GM12878 (cell line): ENCODE measurements at regions of chr13 and their contacts with region 1.

Region 1: GRCh38 chr13:75760131-75761021 is 124.2 kb downstream of the LMO7 start:
- DNase-seq: no peak
- ATAC-seq: no peak
- H3K4me3 ChIP-seq: no peak overlapping the region
- H3K27ac ChIP-seq: peak overlapping the region; percentile 93
- H3K4me1 ChIP-seq: peaks cover 15% of the 10 kb centered on the region
- H3K27me3 ChIP-seq: no peaks in the 10 kb centered on the region
- CTCF ChIP-seq: no peak
- EP300 ChIP-seq: no peak
- POLR2A ChIP-seq: no peak
- RAD21 ChIP-seq: peak; percentile 20; the same call in 1 of the 2 replicates

Region 2: GRCh38 chr13:75715601-75716523 is 44.5 kb before region 1 on chr13:
- CTCF ChIA-PET with region 1: interaction called, 4 read pairs
- POLR2A ChIA-PET with region 1: interaction called, 3 read pairs
- RAD21 ChIA-PET with region 1: interaction called, 9 read pairs
- SMC1A ChIA-PET with region 1: interaction called, 25 read pairs
- in situ Hi-C with region 1: no loop called
- intact Hi-C with region 1: no loop called
- DNase-seq: peak; percentile 41
- ATAC-seq: peak; percentile 96
- H3K4me3 ChIP-seq: no peak overlapping the region
- H3K27ac ChIP-seq: peak overlapping the region; percentile 35; the same call in 1 of the 2 replicates
- H3K4me1 ChIP-seq: no peaks in the 10 kb centered on the region
- H3K27me3 ChIP-seq: no peaks in the 10 kb centered on the region
- CTCF ChIP-seq: no peak
- EP300 ChIP-seq: no peak
- POLR2A ChIP-seq: no peak
- RAD21 ChIP-seq: no peak

Region 3: GRCh38 chr13:75739244-75739868 is 21.0 kb before region 1 on chr13:
- CTCF ChIA-PET with region 1: no interaction called
- POLR2A ChIA-PET with region 1: interaction called, 5 read pairs
- RAD21 ChIA-PET with region 1: interaction called, 8 read pairs
- SMC1A ChIA-PET with region 1: interaction called, 30 read pairs
- in situ Hi-C with region 1: no loop called
- intact Hi-C with region 1: no loop called
- DNase-seq: peak; percentile 24
- ATAC-seq: peak; percentile 73
- H3K4me3 ChIP-seq: peak overlapping the region; percentile 10; the same call in 1 of the 2 replicates
- H3K27ac ChIP-seq: peak overlapping the region; percentile 80
- H3K4me1 ChIP-seq: peaks cover 19% of the 10 kb centered on the region
- H3K27me3 ChIP-seq: no peaks in the 10 kb centered on the region
- CTCF ChIP-seq: no peak
- EP300 ChIP-seq: no peak
- POLR2A ChIP-seq: no peak
- RAD21 ChIP-seq: no peak

Region 4: DNA sequence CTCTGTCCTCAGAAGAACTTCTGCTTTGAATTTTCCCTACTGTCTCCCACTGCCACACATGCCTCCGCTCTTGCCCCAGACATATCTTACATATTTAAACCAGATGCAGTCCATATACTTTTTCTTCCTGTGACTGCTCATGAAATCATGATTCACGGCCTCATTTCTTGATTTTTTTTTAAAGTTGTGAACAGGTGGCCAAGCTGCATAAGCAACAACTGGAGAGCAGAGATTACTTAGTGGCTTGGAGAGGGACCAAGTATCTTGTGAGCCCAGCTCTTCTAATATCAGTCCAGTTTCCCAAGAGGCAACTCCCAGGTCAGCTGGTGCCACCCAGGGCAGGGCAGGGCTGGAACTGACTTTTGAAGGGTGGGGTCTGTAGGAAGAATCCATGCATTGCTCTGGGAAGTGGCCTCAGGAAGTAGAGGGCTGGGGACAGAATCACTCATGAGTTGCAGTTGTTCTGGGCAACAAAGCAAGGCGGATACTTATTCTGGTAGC is 28.2 kb after region 1 on chr13:
- CTCF ChIA-PET with region 1: interaction called, 3 read pairs
- POLR2A ChIA-PET with region 1: interaction called, 4 read pairs
- RAD21 ChIA-PET with region 1: interaction called, 14 read pairs
- SMC1A ChIA-PET with region 1: interaction called, 50 read pairs
- in situ Hi-C with region 1: no loop called
- intact Hi-C with region 1: no loop called
- DNase-seq: no peak
- ATAC-seq: no peak
- H3K4me3 ChIP-seq: no peak overlapping the region
- H3K27ac ChIP-seq: no peak overlapping the region
- H3K4me1 ChIP-seq: no peaks in the 10 kb centered on the region
- H3K27me3 ChIP-seq: no peaks in the 10 kb centered on the region
- CTCF ChIP-seq: no peak
- EP300 ChIP-seq: no peak
- POLR2A ChIP-seq: no peak
- RAD21 ChIP-seq: no peak

Region 5: GRCh38 chr13:75803164-75803611 is 42.8 kb after region 1 on chr13:
- CTCF ChIA-PET with region 1: interaction called, 14 read pairs
- POLR2A ChIA-PET with region 1: no interaction called
- RAD21 ChIA-PET with region 1: interaction called, 6 read pairs
- SMC1A ChIA-PET with region 1: interaction called, 31 read pairs
- in situ Hi-C with region 1: no loop called
- intact Hi-C with region 1: no loop called
- DNase-seq: no peak
- ATAC-seq: peak; percentile 33
- H3K4me3 ChIP-seq: no peak overlapping the region
- H3K27ac ChIP-seq: peak overlapping the region; percentile 38
- H3K4me1 ChIP-seq: no peaks in the 10 kb centered on the region
- H3K27me3 ChIP-seq: no peaks in the 10 kb centered on the region
- CTCF ChIP-seq: no peak
- EP300 ChIP-seq: no peak
- POLR2A ChIP-seq: no peak
- RAD21 ChIP-seq: no peak